PC-9 (cell line): ENCODE measurements at regions of chr2 and their contacts with region 1.

Region 1: GRCh38 chr2:39124000-39124745 is 3.3 kb upstream of the SOS1 start:
- DNase-seq: peak; percentile 90 to 94
- H3K4me3 ChIP-seq: peak overlapping the region; percentile 83
- H3K27ac ChIP-seq: peak overlapping the region; percentile 52
- H3K4me1 ChIP-seq: peaks cover 29% of the 10 kb centered on the region
- H3K27me3 ChIP-seq: no peaks in the 10 kb centered on the region
- CTCF ChIP-seq: peak; percentile 63

Region 2: GRCh38 chr2:38947240-38948239 is 176.6 kb before region 1 on chr2:
- CTCF ChIA-PET with region 1: interaction called, 5 read pairs
- POLR2A ChIA-PET with region 1: interaction called, 9 read pairs
- intact Hi-C with region 1: loop called (anchors 1 kb)
- DNase-seq: peak; percentile 82 to 97
- H3K4me3 ChIP-seq: peak overlapping the region; percentile 21; the same call in 1 of the 2 replicates
- H3K27ac ChIP-seq: peak overlapping the region; percentile 63
- H3K4me1 ChIP-seq: peaks cover 21% of the 10 kb centered on the region
- H3K27me3 ChIP-seq: no peaks in the 10 kb centered on the region
- CTCF ChIP-seq: peak; percentile 88

Region 3: GRCh38 chr2:39179974-39180970 is 56.1 kb after region 1 on chr2:
- CTCF ChIA-PET with region 1: no interaction called
- POLR2A ChIA-PET with region 1: no interaction called
- intact Hi-C with region 1: loop called (anchors 1 kb)
- DNase-seq: peak; percentile 82 to 88
- H3K4me3 ChIP-seq: no peak overlapping the region
- H3K27ac ChIP-seq: no peak overlapping the region
- H3K4me1 ChIP-seq: peaks cover 14% of the 10 kb centered on the region
- H3K27me3 ChIP-seq: no peaks in the 10 kb centered on the region
- CTCF ChIP-seq: no peak

Region 4: GRCh38 chr2:39377226-39377939 is 253.2 kb after region 1 on chr2:
- CTCF ChIA-PET with region 1: no interaction called
- POLR2A ChIA-PET with region 1: no interaction called
- intact Hi-C with region 1: no loop called
- DNase-seq: no peak
- H3K4me3 ChIP-seq: no peak overlapping the region
- H3K27ac ChIP-seq: no peak overlapping the region
- H3K4me1 ChIP-seq: no peaks in the 10 kb centered on the region
- H3K27me3 ChIP-seq: no peaks in the 10 kb centered on the region
- CTCF ChIP-seq: no peak